Activated CD4-positive, alpha-beta T cell treated with anti-CD3 and anti-CD28 coated beads, Interleukin-2, amount 10 ng/mL, durations not matched to agents 7 days and 5 days (primary cell): ENCODE measurements at regions of chr12 and their contacts with region 1.

Region 1: DNA sequence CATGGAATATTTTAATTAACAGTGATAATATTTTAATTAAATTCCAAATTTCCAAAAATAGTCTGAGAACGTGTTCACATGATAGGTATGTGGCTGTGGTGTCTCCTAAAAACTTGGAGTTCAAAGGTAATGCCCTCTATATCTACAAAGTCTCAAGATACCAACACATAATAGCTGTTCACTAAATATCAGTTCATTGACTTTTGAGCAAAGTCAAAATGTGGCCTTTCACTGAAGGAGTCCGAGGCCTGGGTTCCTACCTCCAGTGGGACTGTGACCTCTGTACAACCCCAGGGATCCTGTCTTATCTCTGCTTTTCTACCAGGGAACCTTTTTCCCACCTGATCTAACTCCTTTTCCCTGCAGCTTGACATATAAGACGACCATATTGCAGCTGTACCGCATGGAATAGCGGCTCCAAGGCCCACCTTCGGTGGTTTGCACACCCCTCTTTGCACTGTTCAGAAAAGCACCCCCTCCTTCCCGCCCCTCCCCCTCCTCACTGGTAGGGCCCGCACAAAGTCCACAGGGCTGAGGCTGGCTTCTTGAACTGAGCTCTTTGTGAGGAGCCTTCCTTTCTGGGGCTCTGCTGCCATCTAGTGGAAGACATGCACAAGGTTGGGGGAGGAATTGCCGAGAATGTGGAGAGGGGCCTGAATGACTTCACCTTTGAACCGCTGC is 3.1 kb downstream of the CCND2 start:
- DNase-seq: peak; percentile 92
- H3K4me3 Mint-ChIP-seq: peak overlapping the region; percentile 95
- H3K27ac Mint-ChIP-seq: peak overlapping the region; percentile 63
- H3K4me1 Mint-ChIP-seq: peaks cover 55% of the 10 kb centered on the region
- H3K27me3 Mint-ChIP-seq: no peaks in the 10 kb centered on the region

Region 2: GRCh38 chr12:3896801-3897331 is 379.8 kb before region 1 on chr12:
- CTCF ChIA-PET with region 1: interaction called, 12 read pairs
- POLR2A ChIA-PET with region 1: no interaction called
- DNase-seq: peak; percentile 10
- H3K4me3 Mint-ChIP-seq: peak overlapping the region; percentile 59
- H3K27ac Mint-ChIP-seq: peak overlapping the region; percentile 94
- H3K4me1 Mint-ChIP-seq: peaks cover 39% of the 10 kb centered on the region
- H3K27me3 Mint-ChIP-seq: no peaks in the 10 kb centered on the region

Region 3: GRCh38 chr12:3998968-3999826 is 277.5 kb before region 1 on chr12:
- CTCF ChIA-PET with region 1: interaction called, 47 read pairs
- POLR2A ChIA-PET with region 1: no interaction called
- DNase-seq: no peak
- H3K4me3 Mint-ChIP-seq: no peak overlapping the region
- H3K27ac Mint-ChIP-seq: no peak overlapping the region
- H3K4me1 Mint-ChIP-seq: peaks cover 13% of the 10 kb centered on the region
- H3K27me3 Mint-ChIP-seq: no peaks in the 10 kb centered on the region

Region 4: DNA sequence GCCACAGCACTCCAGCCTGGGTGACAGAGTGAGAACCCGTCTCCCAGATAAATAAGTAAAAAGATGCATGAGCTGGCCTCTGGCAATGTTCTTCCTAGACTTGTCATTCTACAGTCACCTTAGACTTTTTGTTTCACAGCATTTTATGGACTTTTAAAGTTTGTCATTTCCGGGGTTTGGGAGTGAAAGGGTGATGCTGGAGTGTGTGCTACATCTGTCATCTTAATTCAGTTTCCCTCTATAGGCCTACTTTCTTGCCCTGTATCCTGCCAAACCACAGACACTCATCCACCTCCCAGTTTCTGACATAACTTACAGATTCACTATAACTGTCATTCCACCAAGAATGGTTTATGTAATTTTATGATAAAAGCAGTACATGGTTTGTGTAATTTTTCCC is 236.7 kb before region 1 on chr12:
- CTCF ChIA-PET with region 1: interaction called, 10 read pairs
- POLR2A ChIA-PET with region 1: interaction called, 4 read pairs
- DNase-seq: no peak
- H3K4me3 Mint-ChIP-seq: no peak overlapping the region
- H3K27ac Mint-ChIP-seq: no peak overlapping the region
- H3K4me1 Mint-ChIP-seq: peaks cover 4% of the 10 kb centered on the region
- H3K27me3 Mint-ChIP-seq: peaks cover 6% of the 10 kb centered on the region

Region 5: DNA sequence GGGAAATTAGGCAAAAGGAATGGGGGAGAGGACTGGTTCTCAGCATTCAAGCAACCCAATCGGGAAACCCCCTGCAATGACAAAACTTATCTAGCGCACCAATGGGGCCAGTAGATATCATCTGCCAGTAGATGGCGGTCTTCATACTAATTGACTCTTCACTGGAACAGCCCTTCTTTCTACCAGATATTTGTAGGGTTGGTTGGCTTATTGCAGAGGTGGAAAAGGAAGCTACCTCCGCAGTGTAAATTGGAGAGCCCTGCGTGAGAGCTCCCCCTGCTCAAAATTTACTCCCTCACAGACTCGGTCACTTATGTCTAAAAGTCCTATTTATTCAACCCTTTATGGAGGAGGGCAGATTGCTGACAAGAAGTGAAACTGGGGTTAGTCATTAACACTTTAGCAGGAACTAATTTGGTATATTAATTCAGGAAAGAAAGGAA is 169.2 kb before region 1 on chr12:
- CTCF ChIA-PET with region 1: interaction called, 56 read pairs
- POLR2A ChIA-PET with region 1: interaction called, 12 read pairs
- DNase-seq: peak; percentile 87
- H3K4me3 Mint-ChIP-seq: no peak overlapping the region
- H3K27ac Mint-ChIP-seq: peak overlapping the region; percentile 87
- H3K4me1 Mint-ChIP-seq: peaks cover 58% of the 10 kb centered on the region
- H3K27me3 Mint-ChIP-seq: peaks cover 5% of the 10 kb centered on the region

Region 6: GRCh38 chr12:4148418-4149056 is 128.1 kb before region 1 on chr12:
- CTCF ChIA-PET with region 1: interaction called, 29 read pairs
- POLR2A ChIA-PET with region 1: interaction called, 6 read pairs
- DNase-seq: no peak
- H3K4me3 Mint-ChIP-seq: no peak overlapping the region
- H3K27ac Mint-ChIP-seq: peak overlapping the region; percentile 28
- H3K4me1 Mint-ChIP-seq: peaks cover 90% of the 10 kb centered on the region
- H3K27me3 Mint-ChIP-seq: no peaks in the 10 kb centered on the region

Region 7: GRCh38 chr12:4392223-4392742 is 115.6 kb after region 1 on chr12:
- CTCF ChIA-PET with region 1: no interaction called
- POLR2A ChIA-PET with region 1: no interaction called
- DNase-seq: no peak
- H3K4me3 Mint-ChIP-seq: no peak overlapping the region
- H3K27ac Mint-ChIP-seq: no peak overlapping the region
- H3K4me1 Mint-ChIP-seq: peaks cover 8% of the 10 kb centered on the region
- H3K27me3 Mint-ChIP-seq: peaks cover 47% of the 10 kb centered on the region